ENCODE measurements at regions of chr1 and their contacts with region 1.

Region 1: DNA sequence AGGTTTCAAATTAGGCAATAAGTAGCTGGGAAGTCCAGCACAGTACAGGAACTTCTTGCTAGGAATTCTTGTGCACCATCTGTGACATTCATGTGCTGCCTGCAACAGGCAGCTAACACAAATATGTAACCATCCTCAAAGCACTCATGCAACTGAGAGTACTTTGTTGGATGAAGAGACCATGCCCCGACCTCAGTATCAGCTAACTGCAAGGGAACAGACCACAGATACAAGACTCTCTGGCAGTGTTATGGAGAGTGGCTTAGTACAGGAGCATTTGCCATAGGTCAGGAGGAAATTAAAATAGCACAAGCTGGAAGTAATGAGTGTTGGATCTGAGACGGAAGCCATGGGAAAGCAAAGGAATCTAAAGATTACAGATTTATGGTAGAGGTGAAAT is 123.6 kb downstream of the LRRC53 start:
- DNase-seq: no peak
- ATAC-seq: peak; percentile 61

Region 2: DNA sequence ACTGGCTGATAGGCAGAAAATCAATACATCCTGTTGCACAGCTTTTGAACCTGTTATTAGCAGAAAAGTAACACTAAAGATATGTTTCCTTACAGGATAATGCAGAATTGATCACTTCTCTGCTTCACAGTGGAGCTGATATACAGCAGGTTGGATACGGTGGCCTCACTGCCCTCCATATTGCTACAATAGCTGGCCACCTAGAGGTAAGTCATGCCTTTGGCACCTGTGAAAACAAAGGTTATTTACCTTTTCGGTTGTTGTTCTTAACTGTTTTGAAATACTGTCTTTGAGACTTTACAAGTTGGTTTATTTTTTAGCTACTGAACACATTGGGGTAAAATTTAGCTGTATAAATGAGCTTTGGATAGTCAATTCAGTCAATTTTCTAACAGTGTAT is 117.4 kb before region 1 on chr1:
- intact Hi-C with region 1: no loop called
- DNase-seq: no peak
- ATAC-seq: no peak

Region 3: GRCh38 chr1:74733604-74734484 is 345.0 kb after region 1 on chr1:
- intact Hi-C with region 1: loop called (anchors 5 kb)
- DNase-seq: no peak
- ATAC-seq: peak; percentile 72

Region 4: DNA sequence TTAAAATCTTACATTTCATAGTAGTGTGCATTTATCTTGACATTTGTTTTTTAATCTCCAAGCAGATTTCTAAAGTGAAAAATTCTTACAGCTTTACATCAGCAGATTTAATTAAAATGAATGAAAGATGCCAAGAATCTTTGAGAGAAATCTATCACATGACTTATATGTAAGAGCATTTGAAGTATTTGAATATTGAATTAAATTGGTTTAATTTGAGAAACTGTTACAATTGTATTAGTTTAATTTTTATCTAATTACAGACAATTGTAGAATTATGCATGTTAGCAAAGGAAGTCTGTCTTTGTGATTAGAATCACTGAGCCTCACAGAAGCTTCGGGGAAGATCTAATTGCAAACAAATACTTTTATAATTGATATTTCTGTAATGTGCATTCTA is 1491.1 kb after region 1 on chr1:
- intact Hi-C with region 1: no loop called
- DNase-seq: no peak
- ATAC-seq: no peak

Measured in Right ventricle myocardium inferior (tissue), 1 donor.